Sciatic nerve (tissue), 2 donors: ENCODE measurements at regions of chr12 and their contacts with region 1.

Region 1: DNA sequence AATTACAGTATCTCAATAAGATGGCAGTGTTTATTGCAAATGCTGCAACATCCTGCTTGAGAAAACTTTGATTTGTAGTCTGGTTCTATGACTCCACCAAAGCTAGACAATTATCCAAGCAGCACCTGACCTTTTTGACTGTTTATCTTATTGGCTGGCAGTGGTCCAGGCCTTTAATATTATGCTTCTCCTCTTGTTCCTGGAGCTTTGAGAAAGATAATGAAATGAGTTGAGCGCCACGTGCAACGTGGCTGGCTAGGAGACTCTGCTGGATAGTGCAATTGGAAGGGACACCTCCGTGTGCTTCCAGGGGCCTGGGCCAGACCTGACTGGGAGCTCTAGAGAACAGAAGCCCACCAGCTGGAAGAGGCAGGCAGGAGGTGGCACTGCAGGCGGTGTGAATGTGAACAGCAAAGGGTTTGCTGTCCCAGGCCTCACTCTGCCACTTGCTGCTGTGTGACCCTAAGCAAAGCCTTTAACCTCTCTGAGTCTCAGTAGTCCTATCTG is 349.3 kb downstream of the CACNA1C start:
- DNase-seq: no peak
- ATAC-seq: no peak

Region 2: GRCh38 chr12:559924-560457 is 1842.1 kb before region 1 on chr12:
- intact Hi-C with region 1: loop called (anchors 5 kb)
- DNase-seq: no peak
- ATAC-seq: no peak